HEK293T (cell line): ENCODE measurements at regions of chr1 and their contacts with region 1.

Region 1: GRCh38 chr1:112817555-112818373 is 102.6 kb upstream of the PPM1J start:
- DNase-seq: no peak

Region 2: DNA sequence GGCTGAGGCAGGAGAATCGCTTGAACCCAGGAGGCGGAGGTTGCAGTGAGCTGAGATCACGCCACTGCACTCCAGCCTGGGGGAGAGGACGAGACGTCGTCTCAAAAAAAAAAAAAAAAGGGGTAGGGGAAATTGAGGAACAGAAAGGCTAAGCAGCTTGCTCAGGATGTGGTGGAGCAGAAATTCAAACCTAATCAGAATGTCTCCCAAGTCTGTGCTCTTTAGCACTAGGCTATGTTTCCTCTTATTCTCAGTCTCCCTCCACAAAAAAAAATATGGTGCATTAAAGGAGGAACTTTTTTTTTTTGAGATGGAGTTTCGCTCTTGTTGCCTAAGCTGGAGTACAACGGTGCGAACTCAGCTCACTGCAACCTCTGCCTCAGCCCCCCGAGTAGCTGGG is 24.1 kb after region 1 on chr1:
- CTCF ChIA-PET with region 1: no interaction called
- POLR2A ChIA-PET with region 1: no interaction called
- DNase-seq: no peak

Region 3: DNA sequence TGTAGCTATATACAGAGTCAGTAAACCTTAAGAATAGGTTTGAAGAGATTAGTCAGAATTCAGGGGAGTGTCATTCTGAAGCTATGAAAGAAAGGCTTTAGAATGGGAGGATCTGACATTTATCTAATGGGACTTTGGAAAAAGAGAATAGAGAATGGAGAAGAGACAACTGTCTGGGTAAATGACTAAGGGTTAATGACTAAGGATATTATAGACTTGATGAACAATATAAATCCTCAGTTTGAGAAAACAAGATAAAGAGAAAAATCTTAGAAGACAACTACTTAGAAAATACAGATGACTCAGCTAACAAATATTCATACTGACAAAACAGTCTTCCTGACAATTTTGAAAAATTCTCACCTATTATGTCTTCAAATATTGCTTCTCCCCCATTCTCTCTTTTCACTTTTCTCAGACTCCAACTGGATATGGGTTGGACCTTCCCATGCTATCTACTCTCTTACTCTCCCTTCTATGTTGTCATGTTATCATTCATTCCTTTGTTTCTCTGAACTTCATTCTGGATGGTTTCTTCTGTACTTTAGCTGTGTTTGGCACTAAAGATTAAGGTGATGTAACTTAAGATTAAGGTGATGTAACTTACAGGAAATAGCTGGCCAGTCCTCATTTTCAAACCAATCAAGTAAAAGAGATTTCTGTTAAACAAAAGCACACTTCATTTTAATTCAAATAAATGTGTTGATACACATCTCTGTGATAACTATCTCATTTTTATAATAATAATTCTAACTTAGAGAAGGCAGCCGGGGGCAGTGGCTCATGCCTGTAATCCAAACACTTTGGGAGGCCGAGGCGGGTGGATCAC is 117.9 kb after region 1 on chr1:
- CTCF ChIA-PET with region 1: interaction called, 12 read pairs
- POLR2A ChIA-PET with region 1: no interaction called
- DNase-seq: no peak